H1 (cell line): ENCODE measurements at regions of chr12 and their contacts with region 1.

Region 1: DNA sequence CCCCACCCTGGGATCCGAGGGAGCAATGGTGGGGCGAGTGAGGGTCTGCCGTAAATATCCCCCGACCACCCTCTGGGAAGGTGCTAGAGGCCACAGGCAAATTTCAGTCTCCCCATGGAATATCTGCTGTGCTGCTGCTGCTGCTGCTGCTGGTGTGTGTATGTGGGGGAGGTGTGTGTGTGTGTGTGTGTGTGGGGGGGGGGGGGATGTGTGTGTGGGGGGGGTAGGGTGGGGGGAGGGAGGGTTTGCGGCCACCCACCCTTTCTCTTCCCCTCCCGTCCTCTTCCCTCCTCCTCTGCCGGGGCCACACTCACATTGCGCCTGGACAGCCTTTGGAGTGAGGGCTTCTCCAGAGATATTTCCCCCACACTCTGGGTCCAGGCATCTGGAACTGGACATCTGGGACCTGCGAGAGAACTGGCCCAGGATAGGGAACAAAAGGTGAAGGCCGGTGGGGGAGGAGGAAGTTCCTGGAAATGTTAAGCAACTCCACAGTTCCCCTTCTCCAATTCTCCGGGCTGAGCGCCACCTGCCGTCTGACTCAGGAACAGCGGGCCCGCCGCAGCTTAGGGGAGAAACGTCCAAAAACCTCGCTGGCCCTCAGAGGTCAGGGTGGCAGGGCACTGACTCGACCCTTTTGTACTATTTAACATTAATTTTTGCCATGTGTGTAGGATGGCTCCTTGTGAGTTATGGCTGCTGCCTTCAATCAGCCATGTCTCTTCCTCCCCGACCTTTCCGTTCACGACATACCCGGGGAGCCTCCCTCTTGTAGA is at the start of gene C1RL:
- DNase-seq: peak; percentile 53 to 99
- H3K4me3 ChIP-seq: peak within 1 kb of the TSS; percentile 63 to 80 (median 75)
- H3K27ac ChIP-seq: peak within 1 kb of the TSS; percentile 13; the same call in 1 of the 2 replicates
- H3K4me1 ChIP-seq: 0 out of 7 replicates have a peak, but pooled peaks cover 0 to 2% (median 0%) of the 10 kb centered on the region in 4 experiments
- H3K27me3 ChIP-seq: no peaks in the 10 kb centered on the region
- CTCF ChIP-seq: peak; percentile 82 to 95 (median 91)
- EP300 ChIP-seq: no peak
- POLR2A ChIP-seq: 0 out of 3 replicates have a peak, but pooled peaks of 1 of the 2 experiments have one; percentile 3
- RAD21 ChIP-seq: peak; percentile 66 to 79
- total RNA-seq, gene C1RL: 11.4 and 14.7 TPM in 2 replicates

Region 2: GRCh38 chr12:6965026-6965661 is 143.8 kb before region 1 on chr12:
- CTCF ChIA-PET with region 1: interaction called, 11 read pairs
- POLR2A ChIA-PET with region 1: interaction called, 34 read pairs
- DNase-seq: peak in 1 of 2 experiments; percentile 88
- H3K4me3 ChIP-seq: peak overlapping the region in 2 of 4 experiments; percentile 23 to 79; a peak in 2 of 8 replicates
- H3K27ac ChIP-seq: peak overlapping the region; percentile 43; the same call in 1 of the 2 replicates
- H3K4me1 ChIP-seq: peaks cover 12 to 50% (median 32%) of the 10 kb centered on the region in 4 experiments
- H3K27me3 ChIP-seq: no peaks in the 10 kb centered on the region
- CTCF ChIP-seq: peak in 2 of 3 experiments; percentile 78 to 90; a peak in 3 of 4 replicates
- EP300 ChIP-seq: no peak
- POLR2A ChIP-seq: peak in 1 of 2 experiments; percentile 46; a peak in 2 of 3 replicates
- RAD21 ChIP-seq: peak; percentile 64 to 72

Region 3: DNA sequence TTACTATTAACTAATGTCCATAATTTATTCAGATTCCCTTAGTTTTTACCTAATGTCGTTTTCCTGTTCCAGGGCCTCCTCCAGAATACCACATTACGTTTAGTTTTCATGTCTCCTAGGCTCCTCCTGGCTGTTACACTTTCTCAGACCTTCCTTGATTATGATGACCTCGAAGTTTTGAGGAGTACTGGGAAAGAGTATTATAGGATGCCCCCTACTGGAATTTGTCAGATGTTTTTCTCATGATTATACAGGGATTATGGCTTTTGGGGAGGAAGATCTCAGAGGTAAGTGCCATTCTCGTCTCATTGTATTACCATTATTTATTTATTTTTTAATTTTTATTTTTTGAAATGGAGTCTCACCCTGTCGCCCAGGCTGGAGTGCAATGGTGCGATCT is 66.1 kb before region 1 on chr12:
- CTCF ChIA-PET with region 1: interaction called, 11 read pairs
- POLR2A ChIA-PET with region 1: no interaction called
- DNase-seq: no peak
- H3K4me3 ChIP-seq: no peak overlapping the region
- H3K27ac ChIP-seq: no peak overlapping the region
- H3K4me1 ChIP-seq: no peaks in the 10 kb centered on the region
- H3K27me3 ChIP-seq: no peaks in the 10 kb centered on the region
- CTCF ChIP-seq: peak in 2 of 3 experiments; percentile 31 to 39; a peak in 2 of 4 replicates
- EP300 ChIP-seq: no peak
- POLR2A ChIP-seq: no peak
- RAD21 ChIP-seq: peak; percentile 47 to 57

Region 4: GRCh38 chr12:7068240-7068993 is 40.6 kb before region 1 on chr12:
- CTCF ChIA-PET with region 1: interaction called, 13 read pairs
- POLR2A ChIA-PET with region 1: interaction called, 3 read pairs
- DNase-seq: no peak
- H3K4me3 ChIP-seq: no peak overlapping the region
- H3K27ac ChIP-seq: no peak overlapping the region
- H3K4me1 ChIP-seq: no peaks in the 10 kb centered on the region
- H3K27me3 ChIP-seq: no peaks in the 10 kb centered on the region
- CTCF ChIP-seq: no peak
- EP300 ChIP-seq: no peak
- POLR2A ChIP-seq: no peak
- RAD21 ChIP-seq: no peak

Region 5: DNA sequence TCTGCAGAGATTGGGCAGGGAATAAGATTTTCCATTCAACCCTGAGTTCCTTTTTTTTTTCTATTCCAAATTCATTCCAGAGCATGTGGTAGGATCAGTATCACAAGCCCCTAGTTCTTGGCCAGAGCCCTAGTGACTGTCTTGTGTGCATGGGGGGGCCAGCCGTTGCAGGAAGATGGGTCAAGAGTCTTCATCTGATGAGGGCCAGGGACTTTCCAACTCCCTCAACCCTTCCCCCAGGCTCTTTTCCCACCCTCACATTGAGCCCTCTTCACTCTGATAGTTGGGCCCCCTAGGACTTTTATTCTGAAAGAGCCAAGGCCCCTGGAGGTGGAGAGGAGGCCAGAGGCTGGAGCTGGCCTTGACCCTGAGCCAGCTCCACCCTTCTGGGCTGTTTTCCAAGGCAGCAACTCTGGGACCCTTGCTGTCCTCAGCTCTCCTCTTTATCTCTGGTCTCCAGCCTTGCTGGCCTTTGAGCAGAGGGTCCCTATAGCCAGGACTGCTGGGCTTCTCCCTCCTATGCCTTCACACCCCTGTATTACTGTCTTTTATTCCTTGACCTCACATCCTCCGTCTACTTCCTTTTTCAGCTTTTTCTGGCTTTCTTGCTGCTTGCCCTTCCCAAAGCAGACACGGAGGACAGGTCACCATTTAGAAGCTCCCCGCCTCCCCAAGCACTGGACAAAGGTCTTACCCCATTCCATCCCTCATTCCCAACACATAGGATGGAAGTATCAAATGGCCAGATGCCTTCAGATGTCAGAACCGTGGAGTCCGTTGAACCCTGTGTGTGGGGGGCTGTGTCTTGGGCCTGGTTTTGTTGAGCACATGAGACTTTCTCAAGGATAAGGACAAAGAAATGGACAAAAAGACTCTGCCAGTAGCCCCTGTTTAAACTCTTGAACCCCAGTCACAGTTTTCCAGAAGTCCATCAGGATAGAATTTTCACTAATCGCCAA is 14.1 kb after region 1 on chr12:
- CTCF ChIA-PET with region 1: interaction called, 34 read pairs
- POLR2A ChIA-PET with region 1: interaction called, 25 read pairs
- DNase-seq: no peak
- H3K4me3 ChIP-seq: no peak overlapping the region
- H3K27ac ChIP-seq: no peak overlapping the region
- H3K4me1 ChIP-seq: peaks cover 0 to 3% (median 0%) of the 10 kb centered on the region in 4 experiments; a peak in 2 of 7 replicates
- H3K27me3 ChIP-seq: no peaks in the 10 kb centered on the region
- CTCF ChIP-seq: no peak
- EP300 ChIP-seq: no peak
- POLR2A ChIP-seq: no peak
- RAD21 ChIP-seq: no peak

Region 6: GRCh38 chr12:7142056-7142644 is 33.2 kb after region 1 on chr12:
- CTCF ChIA-PET with region 1: interaction called, 15 read pairs
- POLR2A ChIA-PET with region 1: interaction called, 3 read pairs
- DNase-seq: peak in 1 of 2 experiments; percentile 85
- H3K4me3 ChIP-seq: no peak overlapping the region
- H3K27ac ChIP-seq: no peak overlapping the region
- H3K4me1 ChIP-seq: no peaks in the 10 kb centered on the region
- H3K27me3 ChIP-seq: no peaks in the 10 kb centered on the region
- CTCF ChIP-seq: peak; percentile 86 to 92 (median 87)
- EP300 ChIP-seq: no peak
- POLR2A ChIP-seq: no peak
- RAD21 ChIP-seq: peak; percentile 57 to 76

Region 7: DNA sequence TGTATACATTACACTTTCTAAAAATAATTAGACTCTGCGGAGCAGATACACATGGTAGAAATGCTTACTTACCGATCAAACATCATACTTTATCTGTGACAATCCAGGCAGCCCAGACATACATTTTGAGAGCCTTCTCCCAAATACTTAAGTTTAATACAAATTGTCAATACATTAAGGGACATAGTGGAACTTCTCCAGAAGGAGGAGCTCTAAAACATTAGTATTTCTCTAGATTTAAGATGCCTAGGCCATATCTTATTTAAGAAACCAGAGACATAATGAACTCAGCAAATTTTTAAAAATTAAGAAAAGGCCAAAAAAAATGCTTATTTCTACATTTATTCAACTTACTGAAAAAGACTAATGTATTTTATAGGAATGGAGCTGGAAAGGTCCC is 210.9 kb after region 1 on chr12:
- CTCF ChIA-PET with region 1: no interaction called
- POLR2A ChIA-PET with region 1: no interaction called
- DNase-seq: no peak
- H3K4me3 ChIP-seq: no peak overlapping the region
- H3K27ac ChIP-seq: no peak overlapping the region
- H3K4me1 ChIP-seq: no peaks in the 10 kb centered on the region
- H3K27me3 ChIP-seq: no peaks in the 10 kb centered on the region
- CTCF ChIP-seq: no peak
- EP300 ChIP-seq: no peak
- POLR2A ChIP-seq: no peak
- RAD21 ChIP-seq: no peak